Mammary epithelial cell (primary cell): ENCODE measurements at regions of chr14 and their contacts with region 1.

Region 1: DNA sequence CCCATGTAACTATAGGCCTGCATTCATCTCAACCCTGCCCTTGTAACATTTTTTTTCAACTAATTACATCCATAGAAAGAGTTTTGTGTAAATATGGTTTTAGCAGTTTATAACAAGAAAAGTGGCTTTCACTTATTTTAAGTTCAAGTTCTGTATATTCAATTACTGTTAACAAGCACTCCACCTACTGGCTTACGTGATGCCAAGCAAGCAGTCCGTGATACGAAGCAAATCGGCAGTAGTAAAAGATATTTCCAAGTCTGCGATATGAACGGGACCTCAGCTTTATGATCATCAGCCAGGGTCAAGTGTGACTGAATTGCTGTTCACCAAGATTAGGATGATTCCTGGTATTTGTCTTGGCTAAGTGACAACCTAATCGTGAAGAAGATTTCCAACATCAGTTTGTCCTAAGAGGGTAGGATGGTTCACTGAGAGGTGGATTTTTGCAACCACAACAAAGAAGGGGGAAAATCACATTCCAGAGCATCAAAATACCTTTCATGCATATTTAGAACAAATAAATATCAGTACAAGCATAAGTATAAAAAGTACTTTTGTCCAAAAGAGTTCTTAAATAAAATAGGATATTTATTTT is 456.2 kb downstream of the FOXG1 start:
- DNase-seq: no peak
- H3K4me3 ChIP-seq: no peak overlapping the region
- H3K27ac ChIP-seq: no peak overlapping the region
- H3K4me1 ChIP-seq: no peaks in the 10 kb centered on the region
- H3K27me3 ChIP-seq: no peaks in the 10 kb centered on the region
- CTCF ChIP-seq: peak in 1 of 2 donors; percentile 50

Region 2: DNA sequence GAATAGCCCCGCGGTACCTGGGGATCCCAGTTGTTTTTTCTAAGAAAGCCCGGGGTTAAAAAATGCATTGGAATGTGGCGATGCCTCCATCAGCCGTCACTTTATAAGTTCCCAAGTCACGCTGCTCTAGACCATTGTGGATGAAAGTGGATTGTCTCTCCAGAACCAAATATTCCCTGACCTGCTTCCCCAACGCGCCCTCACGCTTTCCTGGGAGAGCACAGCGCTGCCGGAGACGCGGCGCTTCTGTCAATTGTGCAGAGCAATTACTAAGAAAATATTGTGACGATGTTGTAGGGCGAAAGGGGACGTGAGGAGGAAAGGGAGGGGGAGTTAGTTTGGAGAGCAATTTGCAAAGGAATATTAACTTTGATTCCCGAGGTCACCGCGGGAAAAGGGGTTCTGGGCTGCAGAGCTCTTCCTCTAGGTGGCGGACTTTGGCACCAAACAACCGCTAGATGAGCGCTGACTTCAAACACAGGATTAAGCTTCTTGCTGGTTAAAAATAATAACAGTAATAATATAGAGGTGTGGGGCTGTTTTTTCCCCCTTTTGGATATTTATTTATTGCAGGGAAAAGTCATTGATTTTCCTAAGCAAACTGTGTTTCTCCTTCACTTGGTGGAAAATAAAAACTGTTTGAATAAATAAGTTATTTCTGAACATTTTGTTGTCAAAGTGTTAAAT is 465.7 kb before region 1 on chr14:
- CTCF ChIA-PET with region 1: no interaction called
- dilution Hi-C with region 1: no loop called
- in situ Hi-C with region 1: no loop called
- intact Hi-C with region 1: loop called (anchors 1 kb)
- DNase-seq: peak; percentile 37
- H3K4me3 ChIP-seq: no peak overlapping the region
- H3K27ac ChIP-seq: no peak overlapping the region
- H3K4me1 ChIP-seq: no peaks in the 10 kb centered on the region
- H3K27me3 ChIP-seq: peaks cover 66% of the 10 kb centered on the region
- CTCF ChIP-seq: peak; percentile 68 to 72

Region 3: GRCh38 chr14:28773861-28774691 is 448.7 kb before region 1 on chr14:
- CTCF ChIA-PET with region 1: no interaction called
- dilution Hi-C with region 1: no loop called
- in situ Hi-C with region 1: no loop called
- intact Hi-C with region 1: loop called (anchors 5 kb)
- DNase-seq: no peak
- H3K4me3 ChIP-seq: no peak overlapping the region
- H3K27ac ChIP-seq: no peak overlapping the region
- H3K4me1 ChIP-seq: no peaks in the 10 kb centered on the region
- H3K27me3 ChIP-seq: peaks cover 74% of the 10 kb centered on the region
- CTCF ChIP-seq: peak; percentile 19 to 52

Region 4: DNA sequence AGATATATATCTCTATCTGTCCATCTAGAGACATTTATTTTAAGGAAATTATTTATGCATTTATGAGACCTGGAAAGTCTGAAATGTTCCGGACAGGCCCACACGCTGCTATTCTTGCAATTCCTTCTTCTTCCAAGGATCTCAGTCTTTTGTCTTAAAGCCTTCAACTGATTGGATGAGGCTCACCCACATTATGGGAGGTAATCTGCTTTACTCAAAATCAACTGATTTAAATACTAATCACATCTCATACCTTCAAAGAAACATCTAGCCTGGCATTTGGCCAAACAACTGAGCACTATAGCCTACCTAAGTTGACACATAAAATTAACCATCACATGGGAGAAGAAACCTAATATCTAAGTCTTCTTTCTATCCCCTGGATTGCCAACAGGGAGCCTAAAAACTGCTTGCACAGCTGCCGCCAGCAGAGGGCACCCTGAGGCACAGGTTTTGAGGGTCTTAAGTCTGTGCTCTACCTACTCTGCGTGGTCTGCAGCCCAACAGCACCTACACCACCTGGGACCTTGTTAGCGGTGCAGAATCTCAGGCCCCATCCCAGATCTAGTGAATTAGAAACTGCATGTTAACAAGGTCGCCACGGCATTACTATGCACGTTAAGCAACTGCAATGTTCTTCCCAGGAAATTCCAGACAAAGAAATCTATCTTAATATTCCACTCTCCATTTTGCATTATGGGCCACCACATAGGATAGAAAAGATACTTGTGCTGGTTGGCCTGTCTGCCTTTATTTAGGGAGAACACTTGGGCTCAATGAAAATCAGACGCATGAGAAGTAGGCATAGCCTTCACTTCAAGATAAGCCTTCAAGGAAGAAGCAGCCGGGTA is 206.5 kb before region 1 on chr14:
- CTCF ChIA-PET with region 1: no interaction called
- dilution Hi-C with region 1: no loop called
- in situ Hi-C with region 1: no loop called
- intact Hi-C with region 1: loop called (anchors 2 kb)
- DNase-seq: no peak
- H3K4me3 ChIP-seq: no peak overlapping the region
- H3K27ac ChIP-seq: no peak overlapping the region
- H3K4me1 ChIP-seq: no peaks in the 10 kb centered on the region
- H3K27me3 ChIP-seq: no peaks in the 10 kb centered on the region
- CTCF ChIP-seq: peak in 1 of 2 donors; percentile 23

Region 5: GRCh38 chr14:29144621-29145020 is 78.1 kb before region 1 on chr14:
- CTCF ChIA-PET with region 1: no interaction called
- dilution Hi-C with region 1: no loop called
- in situ Hi-C with region 1: no loop called
- intact Hi-C with region 1: no loop called
- DNase-seq: no peak
- H3K4me3 ChIP-seq: no peak overlapping the region
- H3K27ac ChIP-seq: no peak overlapping the region
- H3K4me1 ChIP-seq: no peaks in the 10 kb centered on the region
- H3K27me3 ChIP-seq: no peaks in the 10 kb centered on the region
- CTCF ChIP-seq: no peak

Region 6: GRCh38 chr14:29536886-29537511 is 314.2 kb after region 1 on chr14:
- CTCF ChIA-PET with region 1: no interaction called
- dilution Hi-C with region 1: no loop called
- in situ Hi-C with region 1: no loop called
- intact Hi-C with region 1: loop called (anchors 10 kb)
- DNase-seq: no peak
- H3K4me3 ChIP-seq: no peak overlapping the region
- H3K27ac ChIP-seq: no peak overlapping the region
- H3K4me1 ChIP-seq: no peaks in the 10 kb centered on the region
- H3K27me3 ChIP-seq: no peaks in the 10 kb centered on the region
- CTCF ChIP-seq: peak in 1 of 2 donors; percentile 46